GM12878 (cell line): ENCODE measurements at regions of chr17 and their contacts with region 1.

Region 1: DNA sequence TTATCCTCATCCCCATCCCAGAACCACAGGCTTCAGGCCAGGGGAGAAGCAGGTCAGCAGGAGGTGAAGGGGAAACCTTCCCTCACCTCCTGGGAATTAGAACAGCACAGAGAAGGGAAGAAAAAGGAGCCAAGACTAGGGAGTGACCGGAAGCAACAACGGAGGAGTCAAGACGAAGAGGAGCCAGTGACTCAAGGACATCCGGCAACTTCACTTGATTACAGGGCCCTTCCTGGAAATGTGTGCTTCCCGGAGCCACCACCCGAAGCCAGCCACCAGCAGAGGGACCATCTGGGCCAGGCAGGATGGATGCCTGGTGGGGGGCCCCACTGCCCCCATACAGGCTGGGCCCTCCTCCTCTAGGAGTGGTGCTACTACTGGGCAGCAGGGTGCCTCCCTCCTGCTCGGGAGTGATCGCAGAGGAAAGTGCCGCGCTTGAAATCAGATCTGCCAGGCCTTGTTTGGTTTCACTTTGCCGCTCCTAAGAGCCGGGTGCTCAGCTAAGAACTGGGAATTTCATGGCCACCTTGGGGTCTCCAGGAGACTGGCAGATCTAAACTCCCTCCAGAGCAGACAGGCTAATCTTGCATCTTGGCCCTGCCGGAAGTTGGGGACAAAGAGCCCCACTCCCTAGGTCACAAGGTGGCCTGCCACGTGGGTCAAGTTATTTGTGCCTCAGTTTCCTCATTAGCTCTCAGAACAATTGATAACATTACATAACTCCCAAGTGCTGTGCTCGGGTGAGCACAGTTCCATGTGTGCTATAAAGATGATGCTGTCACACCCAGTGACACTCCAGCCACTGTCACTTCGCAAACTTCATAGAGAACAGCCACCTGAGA is 6.6 kb downstream of the CDC42EP4 start:
- DNase-seq: no peak
- ATAC-seq: peak; percentile 34
- H3K4me3 ChIP-seq: peak overlapping the region; percentile 41
- H3K27ac ChIP-seq: peak overlapping the region; percentile 33; the same call in 1 of the 2 replicates
- H3K4me1 ChIP-seq: peaks cover 5% of the 10 kb centered on the region; the same call in 1 of the 2 replicates
- H3K27me3 ChIP-seq: no peaks in the 10 kb centered on the region
- CTCF ChIP-seq: no peak
- EP300 ChIP-seq: no peak
- POLR2A ChIP-seq: no peak
- RAD21 ChIP-seq: no peak

Region 2: DNA sequence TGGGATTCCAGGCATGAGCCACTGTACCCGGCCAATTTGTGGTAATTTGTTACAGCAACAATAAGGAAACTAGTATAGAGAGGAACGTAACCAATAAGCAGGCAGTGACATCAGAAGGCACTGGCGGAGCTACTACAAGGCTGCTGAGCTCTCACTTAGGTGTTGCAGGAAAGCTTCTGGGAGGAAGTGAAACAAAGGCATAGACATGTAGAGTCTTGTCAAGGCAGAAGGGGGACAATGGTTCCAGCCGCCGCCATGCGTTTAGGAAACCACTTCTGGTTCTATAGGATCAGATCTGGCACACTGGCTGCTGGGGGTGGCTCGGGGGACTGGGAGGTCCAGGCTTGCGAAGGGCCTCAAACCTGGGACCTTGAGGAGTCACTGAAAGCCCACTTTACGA is 34.1 kb before region 1 on chr17:
- CTCF ChIA-PET with region 1: interaction called, 8 read pairs
- POLR2A ChIA-PET with region 1: interaction called, 5 read pairs
- RAD21 ChIA-PET with region 1: interaction called, 11 read pairs
- SMC1A ChIA-PET with region 1: interaction called, 18 read pairs
- in situ Hi-C with region 1: loop called (anchors 5 kb)
- intact Hi-C with region 1: no loop called
- DNase-seq: peak; percentile 88
- ATAC-seq: peak; percentile 99
- H3K4me3 ChIP-seq: no peak overlapping the region
- H3K27ac ChIP-seq: peak overlapping the region; percentile 82
- H3K4me1 ChIP-seq: peaks cover 14% of the 10 kb centered on the region
- H3K27me3 ChIP-seq: no peaks in the 10 kb centered on the region
- CTCF ChIP-seq: no peak
- EP300 ChIP-seq: peak; percentile 74 to 88; a peak in 3 of 4 replicates
- POLR2A ChIP-seq: 0 out of 2 replicates have a peak, but pooled peaks have one; percentile 38
- RAD21 ChIP-seq: no peak